ENCODE measurements at regions of chr12 and their contacts with region 1.

Region 1: DNA sequence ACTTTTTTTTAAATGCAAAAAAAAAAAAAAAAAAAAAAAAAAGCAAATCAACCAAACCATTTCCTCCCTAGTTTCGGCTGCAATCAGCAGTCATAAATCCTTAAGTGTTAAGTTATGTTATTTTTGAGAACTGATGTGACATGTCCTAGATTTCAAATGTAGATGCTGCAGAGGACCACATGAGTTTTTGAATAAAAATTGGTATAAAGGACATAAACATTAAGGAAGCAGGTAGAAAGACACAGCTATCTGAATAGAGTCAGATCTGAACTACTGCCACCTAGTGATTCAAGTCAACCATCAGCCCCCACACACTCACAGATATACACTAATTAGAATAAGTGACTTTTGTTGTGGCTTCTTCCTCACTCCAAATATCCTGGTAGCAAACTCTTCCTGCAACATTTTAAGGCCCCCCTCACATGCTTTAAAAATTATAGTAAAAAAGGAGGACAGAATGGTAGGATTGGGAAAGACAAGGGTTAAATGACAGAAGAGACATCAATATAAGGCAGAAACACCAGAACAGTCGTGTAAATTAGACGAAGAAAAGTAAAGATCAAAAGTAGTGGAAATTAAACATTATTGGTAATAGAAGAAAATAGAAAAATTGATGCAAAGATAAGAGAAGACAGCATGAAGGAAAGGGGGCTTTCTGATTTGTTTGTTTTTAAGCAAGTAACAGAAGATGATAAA is 394.5 kb upstream of the ATP2B1 start:
- DNase-seq: peak; percentile 32
- H3K4me3 Mint-ChIP-seq: no peak overlapping the region
- H3K27ac Mint-ChIP-seq: no peak overlapping the region
- H3K4me1 Mint-ChIP-seq: peaks cover 8% of the 10 kb centered on the region
- H3K27me3 Mint-ChIP-seq: peaks cover 7% of the 10 kb centered on the region

Region 2: GRCh38 chr12:89856431-89856830 is 246.7 kb before region 1 on chr12:
- CTCF ChIA-PET with region 1: no interaction called
- intact Hi-C with region 1: loop called (anchors 5 kb)
- DNase-seq: no peak
- H3K4me3 Mint-ChIP-seq: no peak overlapping the region
- H3K27ac Mint-ChIP-seq: no peak overlapping the region
- H3K4me1 Mint-ChIP-seq: peaks cover 42% of the 10 kb centered on the region
- H3K27me3 Mint-ChIP-seq: no peaks in the 10 kb centered on the region

Region 3: DNA sequence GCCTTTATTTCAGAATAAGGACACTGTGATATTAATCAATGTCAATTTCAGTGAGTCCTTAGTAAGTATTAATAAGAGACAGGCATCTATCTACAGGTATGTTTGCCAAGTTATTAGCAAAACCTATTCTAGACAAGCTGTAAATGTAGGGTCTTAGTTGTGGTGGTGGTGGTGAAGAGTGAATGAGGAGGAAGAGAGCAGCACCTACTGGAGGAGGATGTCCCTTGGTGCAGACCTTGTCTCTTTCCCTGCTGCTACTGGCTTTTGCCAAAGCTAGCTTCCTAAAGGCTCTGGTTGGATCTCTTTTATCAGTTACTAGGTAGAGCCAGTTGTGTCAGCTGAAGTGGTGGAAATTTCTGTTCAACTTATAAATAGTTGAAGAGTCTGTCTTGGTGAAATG is 89.7 kb before region 1 on chr12:
- CTCF ChIA-PET with region 1: no interaction called
- intact Hi-C with region 1: loop called (anchors 1 kb)
- DNase-seq: no peak
- H3K4me3 Mint-ChIP-seq: no peak overlapping the region
- H3K27ac Mint-ChIP-seq: no peak overlapping the region
- H3K4me1 Mint-ChIP-seq: no peaks in the 10 kb centered on the region
- H3K27me3 Mint-ChIP-seq: no peaks in the 10 kb centered on the region

Region 4: DNA sequence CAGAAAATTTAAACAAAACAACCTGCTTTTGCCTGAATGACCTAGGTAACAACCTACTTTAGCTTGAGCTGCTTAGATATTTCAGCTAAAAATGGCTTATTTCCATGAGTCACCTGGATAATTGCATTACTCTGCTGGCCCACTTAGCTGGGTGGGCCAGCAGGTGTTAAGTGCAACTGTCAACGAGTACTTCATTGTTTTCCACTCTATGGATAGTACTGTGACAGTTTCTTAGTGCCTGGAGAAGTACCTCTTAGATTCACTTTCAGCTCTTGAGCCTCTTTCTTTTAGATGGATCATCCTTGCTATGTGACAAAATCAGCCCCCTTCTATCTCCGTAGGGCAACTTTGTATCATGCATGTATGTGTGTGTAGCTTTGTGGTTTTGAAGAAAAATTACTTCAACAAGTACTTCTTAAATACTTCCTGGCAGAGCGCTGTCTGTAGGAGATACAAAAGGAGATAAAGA is 26.2 kb before region 1 on chr12:
- CTCF ChIA-PET with region 1: interaction called, 3 read pairs
- intact Hi-C with region 1: loop called (anchors 1 kb)
- DNase-seq: no peak
- H3K4me3 Mint-ChIP-seq: no peak overlapping the region
- H3K27ac Mint-ChIP-seq: no peak overlapping the region
- H3K4me1 Mint-ChIP-seq: peaks cover 24% of the 10 kb centered on the region
- H3K27me3 Mint-ChIP-seq: peaks cover 4% of the 10 kb centered on the region

Measured in activated naive CD4-positive, alpha-beta T cell treated with anti-CD3 and anti-CD28 coated beads for 36 hours (primary cell).